ENCODE measurements at regions of chr5 and their contacts with region 1.

Region 1: DNA sequence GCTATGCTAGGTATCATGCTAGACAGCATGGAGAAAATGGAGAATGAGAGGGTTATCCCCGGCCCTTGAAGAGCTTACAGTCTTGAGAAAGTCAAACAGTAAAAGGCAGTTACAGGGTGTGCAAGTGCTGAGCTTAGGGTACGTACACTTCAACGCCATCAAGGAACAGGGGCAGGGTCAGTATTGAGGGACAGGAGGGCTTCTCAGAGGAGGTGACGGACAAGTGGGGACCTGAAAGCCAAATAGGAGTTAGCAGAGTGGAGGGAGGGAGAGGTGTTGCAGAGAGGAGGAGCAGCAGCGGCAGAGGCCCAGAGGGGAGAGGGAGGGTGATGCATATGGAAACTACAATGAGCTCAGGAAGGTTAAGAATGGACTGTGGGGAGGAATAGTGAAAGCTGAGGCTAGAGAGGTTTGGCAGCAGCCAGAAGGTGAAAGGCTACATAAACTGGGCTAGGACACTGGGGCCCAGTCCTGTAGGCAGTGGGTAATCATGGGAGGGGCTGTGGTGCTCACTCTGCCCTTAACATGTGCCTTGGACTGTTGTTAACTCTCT is 88.0 kb downstream of the NRG2 start:
- DNase-seq: no peak
- H3K4me3 ChIP-seq: no peak overlapping the region
- H3K27ac ChIP-seq: no peak overlapping the region
- H3K4me1 ChIP-seq: peaks cover 0 to 8% of the 10 kb centered on the region in 2 donors
- H3K27me3 ChIP-seq: no peaks in the 10 kb centered on the region
- CTCF ChIP-seq: no peak
- POLR2A ChIP-seq: no peak

Region 2: GRCh38 chr5:140481758-140482157 is 526.6 kb after region 1 on chr5:
- intact Hi-C with region 1: loop called (anchors 5 kb)
- DNase-seq: no peak
- H3K4me3 ChIP-seq: no peak overlapping the region
- H3K27ac ChIP-seq: no peak overlapping the region
- H3K4me1 ChIP-seq: no peaks in the 10 kb centered on the region
- H3K27me3 ChIP-seq: no peaks in the 10 kb centered on the region
- CTCF ChIP-seq: no peak
- POLR2A ChIP-seq: no peak